Activated B cell treated with CpG ODN at 0.5 μM for 24 hours (primary cell): ENCODE measurements at regions of chr21 and their contacts with region 1.

Region 1: GRCh38 chr21:33299181-33299752 is 25.5 kb upstream of the IFNAR1 start:
- DNase-seq: peak; percentile 26
- ATAC-seq: peak; percentile 80
- H3K4me3 Mint-ChIP-seq: peak overlapping the region; percentile 59
- H3K27ac Mint-ChIP-seq: peak overlapping the region; percentile 80
- H3K4me1 Mint-ChIP-seq: peaks cover 82% of the 10 kb centered on the region
- H3K27me3 Mint-ChIP-seq: no peaks in the 10 kb centered on the region
- CTCF ChIP-seq: no peak

Region 2: DNA sequence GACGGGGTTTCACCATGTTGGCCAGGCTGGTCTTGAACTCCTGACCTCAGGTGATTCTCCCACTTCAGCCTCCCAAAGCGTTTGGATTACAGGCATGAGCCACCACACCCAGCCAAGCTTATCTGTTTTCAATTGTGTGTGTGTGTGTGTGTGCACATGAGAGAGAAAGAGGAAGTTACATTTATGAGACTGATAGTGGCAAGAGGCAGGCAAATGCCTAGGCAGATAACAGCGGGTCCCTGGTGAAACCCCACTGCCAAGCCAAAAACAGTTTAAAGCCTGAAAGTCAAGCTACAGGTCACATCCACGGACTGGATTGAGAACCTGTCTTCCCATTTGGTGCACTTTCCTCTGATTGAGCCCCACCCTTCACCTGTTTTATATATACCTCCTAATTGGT is 68.9 kb after region 1 on chr21:
- CTCF ChIA-PET with region 1: no interaction called
- POLR2A ChIA-PET with region 1: interaction called, 11 read pairs
- intact Hi-C with region 1: no loop called
- DNase-seq: no peak
- ATAC-seq: peak; percentile 74
- H3K4me3 Mint-ChIP-seq: no peak overlapping the region
- H3K27ac Mint-ChIP-seq: peak overlapping the region; percentile 70
- H3K4me1 Mint-ChIP-seq: peaks cover 61% of the 10 kb centered on the region
- H3K27me3 Mint-ChIP-seq: no peaks in the 10 kb centered on the region
- CTCF ChIP-seq: no peak